PC-3 (cell line): ENCODE measurements at regions of chr14 and their contacts with region 1.

Region 1: GRCh38 chr14:73759714-73760597 is 45.8 kb upstream of the PNMA1 start:
- DNase-seq: peak; percentile 98
- ATAC-seq: peak; percentile 71
- H3K4me3 ChIP-seq: peak overlapping the region; percentile 93
- H3K27ac ChIP-seq: peak overlapping the region; percentile 67
- H3K4me1 ChIP-seq: peaks cover 57% of the 10 kb centered on the region
- H3K27me3 ChIP-seq: no peaks in the 10 kb centered on the region
- CTCF ChIP-seq: no peak

Region 2: GRCh38 chr14:73728717-73729330 is 31.1 kb before region 1 on chr14:
- CTCF ChIA-PET with region 1: interaction called, 17 read pairs
- POLR2A ChIA-PET with region 1: no interaction called
- intact Hi-C with region 1: loop called (anchors 1 kb)
- DNase-seq: peak; percentile 88
- ATAC-seq: peak; percentile 52
- H3K4me3 ChIP-seq: no peak overlapping the region
- H3K27ac ChIP-seq: no peak overlapping the region
- H3K4me1 ChIP-seq: peaks cover 37% of the 10 kb centered on the region
- H3K27me3 ChIP-seq: no peaks in the 10 kb centered on the region
- CTCF ChIP-seq: peak; percentile 94

Region 3: DNA sequence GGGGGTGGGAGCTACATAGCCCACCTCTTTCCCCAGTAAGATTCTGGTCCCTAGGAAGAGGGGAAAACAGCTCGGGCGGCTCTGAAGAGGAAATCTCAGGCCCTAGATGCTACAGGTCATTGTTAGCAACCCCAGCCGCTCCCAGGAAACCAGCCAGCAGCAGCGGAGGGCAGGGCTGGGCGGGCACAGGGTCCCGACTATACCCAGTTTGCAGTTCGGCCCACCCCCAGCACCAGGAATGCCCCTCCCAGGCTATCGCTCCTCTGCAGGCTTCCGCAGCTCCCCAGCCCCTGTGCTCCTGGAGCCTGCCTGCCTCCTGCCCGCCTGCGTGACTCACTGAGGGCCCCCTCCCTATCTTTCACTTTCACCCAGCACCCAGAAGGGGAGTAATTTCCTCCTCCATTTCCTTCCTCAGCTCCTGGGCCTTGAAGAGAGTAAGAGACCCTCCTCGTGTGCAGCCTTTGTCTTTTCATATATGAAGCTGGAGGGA is 18.5 kb before region 1 on chr14:
- CTCF ChIA-PET with region 1: interaction called, 8 read pairs
- POLR2A ChIA-PET with region 1: interaction called, 7 read pairs
- intact Hi-C with region 1: loop called (anchors 1 kb)
- DNase-seq: peak; percentile 80
- ATAC-seq: peak; percentile 77
- H3K4me3 ChIP-seq: peak overlapping the region; percentile 59
- H3K27ac ChIP-seq: peak overlapping the region; percentile 92
- H3K4me1 ChIP-seq: peaks cover 68% of the 10 kb centered on the region
- H3K27me3 ChIP-seq: no peaks in the 10 kb centered on the region
- CTCF ChIP-seq: no peak

Region 4: GRCh38 chr14:73785873-73786695 is 26.1 kb after region 1 on chr14:
- CTCF ChIA-PET with region 1: interaction called, 6 read pairs
- POLR2A ChIA-PET with region 1: interaction called, 14 read pairs
- intact Hi-C with region 1: loop called (anchors 1 kb)
- DNase-seq: peak; percentile 86
- ATAC-seq: peak; percentile 47
- H3K4me3 ChIP-seq: peak overlapping the region; percentile 73
- H3K27ac ChIP-seq: peak overlapping the region; percentile 97
- H3K4me1 ChIP-seq: peaks cover 56% of the 10 kb centered on the region
- H3K27me3 ChIP-seq: no peaks in the 10 kb centered on the region
- CTCF ChIP-seq: no peak

Region 5: DNA sequence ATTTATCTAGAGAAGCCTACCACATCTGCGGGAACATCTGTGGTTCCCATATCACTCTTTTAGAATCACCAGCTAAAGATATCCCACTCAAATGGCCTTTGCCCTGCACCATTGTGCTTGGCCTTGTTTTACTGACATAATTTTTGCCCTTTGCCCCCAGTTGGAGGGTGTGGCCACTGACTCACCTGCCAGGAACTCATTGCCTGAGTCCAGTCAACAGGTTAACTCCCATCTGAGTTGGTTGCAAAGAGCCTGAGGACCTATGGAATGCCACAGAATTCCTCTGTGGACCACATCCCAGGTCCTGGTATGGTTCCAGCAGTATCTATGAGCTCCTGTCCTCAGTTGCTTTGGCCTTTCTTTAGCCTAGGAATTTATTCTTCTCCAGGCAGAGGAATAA is 36.0 kb after region 1 on chr14:
- CTCF ChIA-PET with region 1: interaction called, 13 read pairs
- POLR2A ChIA-PET with region 1: interaction called, 21 read pairs
- intact Hi-C with region 1: no loop called
- DNase-seq: peak; percentile 97
- ATAC-seq: peak; percentile 96
- H3K4me3 ChIP-seq: no peak overlapping the region
- H3K27ac ChIP-seq: peak overlapping the region; percentile 67
- H3K4me1 ChIP-seq: peaks cover 30% of the 10 kb centered on the region
- H3K27me3 ChIP-seq: no peaks in the 10 kb centered on the region
- CTCF ChIP-seq: no peak